Ascending aorta (tissue), 2 donors: ENCODE measurements at regions of chr4 and their contacts with region 1.

Region 1: GRCh38 chr4:10018818-10019461 is 2.4 kb downstream of the SLC2A9 start:
- DNase-seq: peak; percentile 95 to 98
- H3K4me3 ChIP-seq: peak overlapping the region; percentile 65 to 66
- H3K27ac ChIP-seq: peak overlapping the region; percentile 90 to 92
- H3K4me1 ChIP-seq: peaks cover 0 to 9% of the 10 kb centered on the region in 2 donors
- H3K27me3 ChIP-seq: no peaks in the 10 kb centered on the region
- CTCF ChIP-seq: peak; percentile 99 to 100 (median 99)

Region 2: GRCh38 chr4:9691238-9692065 is 327.5 kb before region 1 on chr4:
- intact Hi-C with region 1: loop called (anchors 2 kb)
- DNase-seq: peak; percentile 87 to 98
- H3K4me3 ChIP-seq: peak overlapping the region; percentile 56 to 74
- H3K27ac ChIP-seq: peak overlapping the region; percentile 60 to 66
- H3K4me1 ChIP-seq: no peaks in the 10 kb centered on the region
- H3K27me3 ChIP-seq: no peaks in the 10 kb centered on the region
- CTCF ChIP-seq: no peak

Region 3: DNA sequence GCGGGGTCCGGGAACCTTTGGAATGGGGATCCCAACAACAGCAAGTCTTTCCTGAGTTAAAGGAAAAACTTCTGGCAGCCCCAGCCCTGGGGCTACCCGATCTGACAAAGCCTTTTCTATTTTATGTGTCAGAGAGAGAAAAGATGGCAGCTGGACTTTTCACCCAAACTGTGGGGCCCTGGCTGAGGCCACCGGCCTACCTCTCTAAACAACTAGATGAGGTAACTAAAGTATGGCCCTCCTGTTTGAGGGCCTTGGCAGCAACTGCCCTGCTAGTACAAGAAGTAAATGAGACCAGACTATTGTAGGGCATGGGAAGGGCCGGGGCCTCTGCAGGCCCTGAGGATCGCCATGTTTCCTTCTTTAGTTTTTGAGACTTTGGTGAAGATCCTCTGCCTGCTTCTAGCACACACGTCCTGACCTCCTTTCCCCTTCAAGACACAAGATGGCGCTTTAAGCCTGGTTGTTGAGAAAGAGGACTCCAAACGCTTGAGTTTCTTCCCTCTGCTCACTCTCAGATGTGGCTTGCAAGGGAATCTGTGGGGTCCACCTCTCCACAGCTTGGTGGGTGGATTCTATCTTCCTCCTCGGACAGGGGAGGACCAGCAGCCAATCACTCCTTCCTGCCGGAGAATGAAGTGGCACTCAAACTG is 256.0 kb before region 1 on chr4:
- intact Hi-C with region 1: loop called (anchors 1 kb)
- DNase-seq: peak in 1 of 2 donors; percentile 77
- H3K4me3 ChIP-seq: no peak overlapping the region
- H3K27ac ChIP-seq: no peak overlapping the region
- H3K4me1 ChIP-seq: no peaks in the 10 kb centered on the region
- H3K27me3 ChIP-seq: no peaks in the 10 kb centered on the region
- CTCF ChIP-seq: peak; percentile 37 to 68 (median 53)

Region 4: DNA sequence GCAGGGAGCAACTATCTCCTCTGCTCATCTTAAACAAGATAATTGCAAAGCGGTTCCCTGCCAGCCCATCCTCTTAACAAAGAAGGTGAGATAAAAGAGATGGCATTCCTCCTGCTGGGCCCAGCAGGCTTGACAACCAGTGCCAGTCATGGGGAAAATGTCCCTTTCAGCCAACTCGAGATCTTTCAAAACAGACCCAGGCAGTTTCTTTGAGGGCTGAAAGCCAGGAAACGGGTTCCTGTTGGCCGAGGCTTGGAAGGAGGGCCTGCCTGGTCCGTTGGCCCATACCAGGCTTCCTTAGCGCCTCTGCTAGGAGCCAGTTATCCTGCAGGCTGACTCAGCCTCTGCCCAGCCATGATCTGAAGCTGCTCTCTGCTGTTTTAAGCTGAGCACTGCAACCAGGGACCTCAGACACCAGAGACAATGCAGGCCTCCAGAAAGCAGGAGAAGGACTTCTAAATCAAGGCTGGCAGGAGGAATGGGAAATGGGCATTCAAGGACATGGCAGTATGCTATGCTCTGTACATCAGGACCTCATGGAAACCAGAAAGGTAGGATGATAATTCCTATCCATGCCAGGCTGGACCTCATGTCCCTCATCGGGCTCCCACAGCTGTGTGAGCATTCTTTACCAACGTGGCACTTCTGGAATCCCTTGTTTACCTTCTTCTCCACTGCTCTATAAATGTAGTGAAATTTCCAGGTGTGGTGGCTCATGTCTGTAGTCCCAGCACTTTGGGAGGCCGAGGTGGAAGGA is 44.8 kb after region 1 on chr4:
- intact Hi-C with region 1: loop called (anchors 1 kb)
- DNase-seq: peak; percentile 48 to 90
- H3K4me3 ChIP-seq: no peak overlapping the region
- H3K27ac ChIP-seq: peak overlapping the region; percentile 34 to 67
- H3K4me1 ChIP-seq: peaks cover 0 to 4% of the 10 kb centered on the region in 2 donors
- H3K27me3 ChIP-seq: no peaks in the 10 kb centered on the region
- CTCF ChIP-seq: peak; percentile 66 to 84 (median 76)

Region 5: GRCh38 chr4:10089346-10089745 is 70.4 kb after region 1 on chr4:
- intact Hi-C with region 1: no loop called
- DNase-seq: no peak
- H3K4me3 ChIP-seq: no peak overlapping the region
- H3K27ac ChIP-seq: no peak overlapping the region
- H3K4me1 ChIP-seq: peaks cover 22 to 44% of the 10 kb centered on the region in 2 donors
- H3K27me3 ChIP-seq: no peaks in the 10 kb centered on the region
- CTCF ChIP-seq: no peak